Activated CD8-positive, alpha-beta T cell treated with anti-CD3 and anti-CD28 coated beads, Interleukin-2, amount 10 ng/mL, durations not matched to agents 7 days and 5 days (primary cell): ENCODE measurements at regions of chr15 and their contacts with region 1.

Region 1: DNA sequence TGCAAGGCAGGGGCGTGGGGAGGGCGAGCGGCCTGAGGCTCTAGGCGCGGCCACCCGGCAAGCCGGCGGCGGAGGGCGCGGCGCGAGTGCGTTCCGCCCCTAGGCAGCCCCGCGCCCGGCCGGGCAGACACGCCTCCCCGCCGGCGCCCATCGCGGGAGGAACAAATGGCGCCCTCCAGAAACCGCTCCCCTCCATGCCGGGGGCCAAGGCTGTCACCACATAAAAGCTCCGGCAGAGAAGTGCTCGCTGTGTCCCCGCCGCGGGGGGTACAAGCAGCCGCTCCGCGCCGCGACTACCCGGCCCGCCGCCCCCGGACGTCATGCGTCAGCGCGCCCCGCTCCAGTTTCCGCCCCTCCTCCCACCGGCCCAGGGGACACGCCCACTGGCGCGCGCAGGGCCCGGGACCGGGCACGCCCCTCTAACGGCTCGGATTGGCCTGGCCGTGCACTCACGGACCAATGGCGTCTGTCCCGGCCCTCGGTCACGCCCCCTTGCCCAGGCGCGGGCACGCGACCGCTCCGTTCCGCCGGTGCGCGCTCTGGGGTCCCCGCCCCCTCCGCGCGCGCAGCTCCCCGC is 391 bp upstream of the KLF13 start:
- DNase-seq: peak; percentile 99
- ATAC-seq: peak; percentile 78
- H3K4me3 Mint-ChIP-seq: peak overlapping the region; percentile 91
- H3K27ac Mint-ChIP-seq: peak overlapping the region; percentile 97
- H3K4me1 Mint-ChIP-seq: peaks cover 58% of the 10 kb centered on the region
- H3K27me3 Mint-ChIP-seq: no peaks in the 10 kb centered on the region

Region 2: DNA sequence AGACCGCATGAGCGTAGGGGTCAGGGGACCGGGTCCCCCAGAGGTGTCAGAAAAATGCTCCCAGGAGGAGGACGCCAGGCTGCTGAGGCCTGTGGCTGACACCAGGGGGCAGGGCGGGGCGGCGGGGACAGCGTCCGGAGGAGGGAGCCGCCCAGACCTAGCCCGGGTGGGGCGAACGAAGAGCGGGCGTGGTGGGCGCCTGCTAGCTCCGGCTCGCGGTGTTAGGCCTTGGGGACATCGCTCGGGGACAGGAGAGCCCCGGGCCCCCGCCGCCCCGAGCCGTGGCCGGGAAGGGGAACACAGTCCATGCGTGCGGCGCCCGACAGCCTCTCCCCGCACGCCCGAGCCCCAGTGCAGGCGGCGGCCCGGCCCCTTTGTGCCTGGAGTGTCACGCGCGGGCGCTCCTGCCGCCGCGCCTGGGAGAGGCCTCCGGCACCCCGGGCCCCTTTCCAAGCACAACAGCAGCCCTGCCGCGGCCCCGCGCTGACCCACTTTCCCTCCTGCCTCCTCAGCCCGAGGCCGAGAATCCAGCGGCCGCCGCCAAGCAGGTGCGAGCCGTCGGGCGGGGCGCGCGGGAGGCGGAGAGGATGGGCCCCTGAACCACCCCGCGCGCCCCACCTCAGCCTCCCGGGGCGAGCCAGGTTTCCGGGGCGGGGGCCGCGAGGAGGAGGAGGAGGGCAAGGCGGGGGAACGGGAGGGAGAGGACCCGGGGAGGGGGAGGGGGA is 110.6 kb before region 1 on chr15:
- CTCF ChIA-PET with region 1: interaction called, 27 read pairs
- POLR2A ChIA-PET with region 1: interaction called, 14 read pairs
- DNase-seq: peak; percentile 89
- ATAC-seq: peak; percentile 82
- H3K4me3 Mint-ChIP-seq: peak overlapping the region; percentile 71
- H3K27ac Mint-ChIP-seq: peak overlapping the region; percentile 63
- H3K4me1 Mint-ChIP-seq: peaks cover 42% of the 10 kb centered on the region
- H3K27me3 Mint-ChIP-seq: no peaks in the 10 kb centered on the region

Region 3: GRCh38 chr15:31265871-31266711 is 60.2 kb before region 1 on chr15:
- CTCF ChIA-PET with region 1: interaction called, 3 read pairs
- POLR2A ChIA-PET with region 1: interaction called, 44 read pairs
- DNase-seq: peak; percentile 87
- ATAC-seq: peak; percentile 77
- H3K4me3 Mint-ChIP-seq: peak overlapping the region; percentile 61
- H3K27ac Mint-ChIP-seq: peak overlapping the region; percentile 95
- H3K4me1 Mint-ChIP-seq: peaks cover 95% of the 10 kb centered on the region
- H3K27me3 Mint-ChIP-seq: no peaks in the 10 kb centered on the region

Region 4: GRCh38 chr15:31280046-31280830 is 46.0 kb before region 1 on chr15:
- CTCF ChIA-PET with region 1: no interaction called
- POLR2A ChIA-PET with region 1: no interaction called
- DNase-seq: peak; percentile 15
- ATAC-seq: no peak
- H3K4me3 Mint-ChIP-seq: no peak overlapping the region
- H3K27ac Mint-ChIP-seq: no peak overlapping the region
- H3K4me1 Mint-ChIP-seq: peaks cover 2% of the 10 kb centered on the region
- H3K27me3 Mint-ChIP-seq: peaks cover 6% of the 10 kb centered on the region

Region 5: DNA sequence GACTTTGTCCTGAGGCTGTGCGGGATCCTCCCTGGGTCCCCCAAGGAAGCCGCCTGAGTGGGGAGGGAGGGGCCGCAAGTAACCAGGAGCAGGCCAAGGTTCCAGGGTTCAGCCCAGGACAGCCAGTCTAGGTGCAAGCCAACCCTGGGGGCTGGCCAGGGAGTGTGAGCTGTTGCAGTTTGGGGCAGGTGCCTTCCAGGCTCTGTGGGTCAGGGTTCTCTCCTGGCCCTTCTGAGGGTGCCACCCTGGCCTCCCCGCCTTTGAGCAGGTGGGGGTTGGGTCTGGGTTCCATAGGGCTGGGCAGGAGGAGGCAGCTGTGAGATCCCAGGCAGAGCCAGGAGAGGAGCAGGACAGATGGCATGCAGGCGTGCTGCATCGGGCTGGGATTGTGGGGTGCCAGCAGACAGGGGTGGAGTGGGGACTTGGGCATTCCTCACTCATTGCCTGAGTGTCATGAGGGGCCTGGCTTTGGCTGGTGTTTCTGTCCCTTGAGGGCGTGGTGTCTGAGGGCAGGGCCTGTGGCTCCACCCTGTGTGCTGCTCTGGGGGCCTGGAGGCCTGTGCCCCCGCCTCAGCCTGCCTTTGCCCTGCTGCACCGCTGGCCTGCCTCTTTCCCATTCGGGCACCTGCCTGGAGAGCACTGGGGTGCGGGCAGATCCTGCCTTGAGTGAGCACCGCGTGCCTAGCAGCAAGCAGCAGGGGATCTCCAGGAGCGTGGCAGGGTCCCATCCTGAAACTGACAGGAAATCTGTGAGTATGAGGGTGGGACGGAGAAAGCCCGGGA is 18.8 kb after region 1 on chr15:
- CTCF ChIA-PET with region 1: interaction called, 4 read pairs
- POLR2A ChIA-PET with region 1: interaction called, 52 read pairs
- DNase-seq: peak; percentile 61
- ATAC-seq: peak; percentile 21
- H3K4me3 Mint-ChIP-seq: peak overlapping the region; percentile 95
- H3K27ac Mint-ChIP-seq: peak overlapping the region; percentile 97
- H3K4me1 Mint-ChIP-seq: peaks cover 98% of the 10 kb centered on the region
- H3K27me3 Mint-ChIP-seq: no peaks in the 10 kb centered on the region

Region 6: GRCh38 chr15:31352911-31353811 is 26.9 kb after region 1 on chr15:
- CTCF ChIA-PET with region 1: interaction called, 3 read pairs
- POLR2A ChIA-PET with region 1: interaction called, 52 read pairs
- DNase-seq: peak; percentile 62
- ATAC-seq: peak; percentile 41
- H3K4me3 Mint-ChIP-seq: peak overlapping the region; percentile 70
- H3K27ac Mint-ChIP-seq: peak overlapping the region; percentile 97
- H3K4me1 Mint-ChIP-seq: peaks cover 98% of the 10 kb centered on the region
- H3K27me3 Mint-ChIP-seq: no peaks in the 10 kb centered on the region